Pancreas (tissue), 10 donors: ENCODE measurements at regions of chr21 and their contacts with region 1.

Region 1: GRCh38 chr21:43810505-43811261 is 21.3 kb downstream of the RRP1 start:
- DNase-seq: peak; percentile 71 to 99 (median 90)
- ATAC-seq: peak; percentile 75 to 94 (median 90)
- H3K4me3 ChIP-seq: no peak overlapping the region
- H3K27ac ChIP-seq: no peak overlapping the region
- H3K4me1 ChIP-seq: peaks cover 0 to 4% (median 0%) of the 10 kb centered on the region in 3 donors
- H3K27me3 ChIP-seq: no peaks in the 10 kb centered on the region
- CTCF ChIP-seq: peak; percentile 82 to 96 (median 94)

Region 2: GRCh38 chr21:43939443-43940328 is 129.0 kb after region 1 on chr21:
- intact Hi-C with region 1: loop called in 1 of 3 experiments (anchors 10 kb)
- DNase-seq: no peak
- ATAC-seq: no peak
- H3K4me3 ChIP-seq: no peak overlapping the region
- H3K27ac ChIP-seq: no peak overlapping the region
- H3K4me1 ChIP-seq: no peaks in the 10 kb centered on the region
- H3K27me3 ChIP-seq: no peaks in the 10 kb centered on the region
- CTCF ChIP-seq: no peak

Region 3: DNA sequence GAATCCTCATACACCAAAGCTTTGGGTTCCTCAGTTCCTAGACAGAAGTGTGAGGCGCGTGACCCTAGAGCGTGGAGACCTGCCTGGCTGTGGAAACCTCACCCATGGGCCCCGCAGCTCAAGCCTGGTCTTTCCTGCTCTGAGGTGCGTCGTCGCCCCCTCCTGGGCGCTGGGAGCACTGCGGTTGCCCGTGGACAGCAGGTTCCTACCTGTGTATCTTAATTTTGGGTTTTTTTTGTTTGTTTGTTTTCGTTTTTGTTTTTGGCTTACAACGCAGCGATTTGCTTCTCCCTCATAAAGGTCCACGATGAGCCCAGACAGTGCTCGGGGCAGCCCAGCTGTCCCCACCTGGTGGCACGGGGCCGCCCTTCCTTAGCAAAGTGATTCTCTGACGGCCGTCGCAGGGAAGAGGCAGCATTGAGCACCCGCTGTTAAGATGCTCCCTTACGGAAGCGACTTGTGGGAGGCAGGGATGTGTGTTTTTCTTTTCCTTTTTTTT is 164.9 kb after region 1 on chr21:
- intact Hi-C with region 1: loop called in 2 of 3 experiments (anchors 5 to 10 kb)
- DNase-seq: peak; percentile 54 to 90 (median 80)
- ATAC-seq: peak; percentile 83 to 93 (median 90)
- H3K4me3 ChIP-seq: no peak overlapping the region
- H3K27ac ChIP-seq: no peak overlapping the region
- H3K4me1 ChIP-seq: no peaks in the 10 kb centered on the region
- H3K27me3 ChIP-seq: no peaks in the 10 kb centered on the region
- CTCF ChIP-seq: peak; percentile 81 to 90 (median 82)